Right lobe of liver (tissue), 6 donors: ENCODE measurements at regions of chr11 and their contacts with region 1.

Region 1: DNA sequence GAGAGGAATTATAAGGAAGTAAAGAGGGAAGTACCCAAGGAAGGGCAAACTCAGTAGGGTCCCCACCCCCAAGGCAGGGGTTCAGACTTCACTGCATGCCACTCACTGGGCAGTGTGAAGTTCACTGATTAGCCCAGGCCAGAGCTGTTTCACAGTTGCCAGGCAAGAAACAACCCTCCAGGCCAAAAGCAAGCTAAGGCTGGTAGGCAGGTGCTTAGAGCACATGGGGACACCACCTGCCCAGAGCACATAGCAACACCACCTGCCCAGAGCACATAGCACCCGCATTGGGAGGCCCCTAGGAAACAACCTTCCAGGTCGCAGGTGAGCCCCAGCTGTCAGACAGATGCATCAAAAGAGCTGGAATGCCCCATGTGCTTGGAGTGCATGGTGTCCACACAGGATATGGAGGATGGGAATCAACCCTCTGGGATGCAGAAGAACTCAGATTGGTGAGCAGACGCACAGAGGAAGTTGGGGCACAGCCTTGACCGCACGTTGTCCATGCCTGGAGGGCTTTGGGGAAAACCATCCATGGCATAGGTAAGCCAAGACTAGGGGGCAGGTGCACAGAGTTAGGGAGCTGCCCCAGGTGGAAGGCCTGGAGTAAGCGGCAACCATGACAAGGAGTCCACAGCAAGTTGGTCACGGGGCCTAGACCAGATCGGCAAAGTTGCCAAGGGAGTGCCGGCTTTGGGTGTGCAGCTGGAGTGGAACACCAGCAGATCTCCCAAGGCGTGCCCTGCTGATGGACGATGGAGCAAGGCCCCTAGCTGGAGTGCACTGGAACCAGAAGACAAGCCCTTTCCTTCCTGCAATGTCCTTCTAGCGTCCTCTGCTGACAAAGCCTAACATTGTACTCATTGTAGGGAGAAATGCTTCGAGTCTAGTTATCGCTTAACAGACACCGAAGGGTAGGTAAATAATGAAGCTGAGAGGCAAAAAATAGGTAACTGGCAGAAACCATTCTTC is 7.8 kb upstream of the TMEM216 start:
- DNase-seq: peak in 1 of 3 donors; percentile 48
- ATAC-seq: peak; percentile 56 to 78 (median 70)
- H3K4me3 ChIP-seq: no peak overlapping the region
- H3K27ac ChIP-seq: no peak overlapping the region
- H3K4me1 ChIP-seq: peaks cover 0 to 7% (median 0%) of the 10 kb centered on the region in 4 donors
- H3K27me3 ChIP-seq: no peaks in the 10 kb centered on the region
- CTCF ChIP-seq: peak; percentile 15 to 47 (median 32)
- POLR2A ChIP-seq: no peak

Region 2: GRCh38 chr11:61266602-61267001 is 118.0 kb before region 1 on chr11:
- intact Hi-C with region 1: loop called in 1 of 2 experiments (anchors 10 kb)
- DNase-seq: no peak
- ATAC-seq: no peak
- H3K4me3 ChIP-seq: no peak overlapping the region
- H3K27ac ChIP-seq: peak overlapping the region; percentile 16 to 71 (median 26)
- H3K4me1 ChIP-seq: peaks cover 0 to 31% (median 8%) of the 10 kb centered on the region in 4 donors
- H3K27me3 ChIP-seq: no peaks in the 10 kb centered on the region
- CTCF ChIP-seq: no peak
- POLR2A ChIP-seq: no peak

Region 3: GRCh38 chr11:61336171-61336922 is 48.2 kb before region 1 on chr11:
- intact Hi-C with region 1: loop called (anchors 5 kb)
- DNase-seq: peak; percentile 82 to 86 (median 84)
- ATAC-seq: peak; percentile 74 to 81 (median 76)
- H3K4me3 ChIP-seq: peak overlapping the region in 1 of 3 donors; percentile 94
- H3K27ac ChIP-seq: peak overlapping the region in 2 of 3 donors; percentile 35 to 85
- H3K4me1 ChIP-seq: peaks cover 0 to 37% (median 14%) of the 10 kb centered on the region in 4 donors
- H3K27me3 ChIP-seq: no peaks in the 10 kb centered on the region
- CTCF ChIP-seq: peak; percentile 99
- POLR2A ChIP-seq: no peak